HEK293 (cell line): ENCODE measurements at regions of chr1 and their contacts with region 1.

Region 1: GRCh38 chr1:44049839-44050238 is 18.6 kb upstream of the SLC6A9 start:
- H3K4me3 ChIP-seq: no peak overlapping the region
- H3K27ac ChIP-seq: no peak overlapping the region
- H3K4me1 ChIP-seq: no peaks in the 10 kb centered on the region
- CTCF ChIP-seq: no peak

Region 2: GRCh38 chr1:43981636-43982035 is 68.2 kb before region 1 on chr1:
- CTCF ChIA-PET with region 1: no interaction called
- POLR2A ChIA-PET with region 1: no interaction called
- H3K4me3 ChIP-seq: no peak overlapping the region
- H3K27ac ChIP-seq: no peak overlapping the region
- H3K4me1 ChIP-seq: peaks cover 3% of the 10 kb centered on the region; the same call in 1 of the 2 replicates
- CTCF ChIP-seq: no peak

Region 3: GRCh38 chr1:43991476-43992231 is 58.2 kb before region 1 on chr1 and contains the start of gene CCDC24:
- CTCF ChIA-PET with region 1: interaction called, 53 read pairs
- POLR2A ChIA-PET with region 1: no interaction called
- H3K4me3 ChIP-seq: peak within 1 kb of the TSS; percentile 72
- H3K27ac ChIP-seq: peak within 1 kb of the TSS; percentile 39; the same call in 1 of the 2 replicates
- H3K4me1 ChIP-seq: no peaks in the 10 kb centered on the region
- CTCF ChIP-seq: 0 out of 2 replicates have a peak, but pooled peaks have one; percentile 25

Region 4: GRCh38 chr1:44002606-44003157 is 47.2 kb before region 1 on chr1:
- CTCF ChIA-PET with region 1: interaction called, 160 read pairs
- POLR2A ChIA-PET with region 1: no interaction called
- H3K4me3 ChIP-seq: no peak overlapping the region
- H3K27ac ChIP-seq: no peak overlapping the region
- H3K4me1 ChIP-seq: no peaks in the 10 kb centered on the region
- CTCF ChIP-seq: no peak

Region 5: DNA sequence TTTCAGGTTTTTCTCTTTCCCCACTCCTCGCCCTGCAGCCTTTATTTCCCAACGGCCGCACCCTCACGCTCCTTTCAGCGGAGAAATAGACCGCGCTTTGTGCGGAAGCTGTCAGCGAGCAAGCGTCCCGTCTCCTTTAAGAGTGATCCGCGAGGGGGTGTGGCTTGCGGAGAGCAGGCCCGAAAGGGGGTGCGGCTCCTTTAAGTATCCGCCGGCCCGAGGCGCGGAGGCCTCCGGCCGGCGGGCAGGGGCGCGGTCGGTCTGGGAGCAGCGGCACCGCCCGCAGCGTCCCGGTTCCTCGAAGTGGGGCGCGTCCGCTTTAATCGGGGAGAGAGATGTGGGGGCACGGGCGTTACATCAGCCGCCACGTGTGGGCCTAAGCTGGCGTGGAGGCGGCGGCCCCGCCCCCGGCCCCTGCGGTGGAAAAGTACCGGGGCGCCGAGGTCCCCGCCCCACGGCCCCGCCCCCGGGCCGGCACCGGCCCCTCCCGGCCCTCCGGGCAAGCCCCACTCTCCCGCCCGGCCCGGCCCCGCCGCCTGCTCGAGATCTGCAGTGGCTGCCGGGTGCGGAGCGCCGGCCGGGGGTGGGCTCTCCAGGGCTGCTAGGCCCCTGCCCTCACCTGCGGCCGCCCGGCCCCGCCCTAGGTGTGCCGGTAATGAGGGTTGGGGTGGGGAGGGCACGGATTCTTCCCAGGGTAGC is 19.8 kb before region 1 on chr1:
- CTCF ChIA-PET with region 1: interaction called, 100 read pairs
- POLR2A ChIA-PET with region 1: interaction called, 4 read pairs
- H3K4me3 ChIP-seq: peak overlapping the region; percentile 67
- H3K27ac ChIP-seq: peak overlapping the region; percentile 85
- H3K4me1 ChIP-seq: peaks cover 5% of the 10 kb centered on the region; the same call in 1 of the 2 replicates
- CTCF ChIP-seq: no peak; the same call in 1 of the 2 replicates

Region 6: GRCh38 chr1:44036409-44037139 is 13.3 kb before region 1 on chr1:
- CTCF ChIA-PET with region 1: interaction called, 100 read pairs
- POLR2A ChIA-PET with region 1: interaction called, 4 read pairs
- H3K4me3 ChIP-seq: no peak overlapping the region
- H3K27ac ChIP-seq: no peak overlapping the region; the same call in 1 of the 2 replicates
- H3K4me1 ChIP-seq: peaks cover 3% of the 10 kb centered on the region; the same call in 1 of the 2 replicates
- CTCF ChIP-seq: peak; percentile 50

Region 7: DNA sequence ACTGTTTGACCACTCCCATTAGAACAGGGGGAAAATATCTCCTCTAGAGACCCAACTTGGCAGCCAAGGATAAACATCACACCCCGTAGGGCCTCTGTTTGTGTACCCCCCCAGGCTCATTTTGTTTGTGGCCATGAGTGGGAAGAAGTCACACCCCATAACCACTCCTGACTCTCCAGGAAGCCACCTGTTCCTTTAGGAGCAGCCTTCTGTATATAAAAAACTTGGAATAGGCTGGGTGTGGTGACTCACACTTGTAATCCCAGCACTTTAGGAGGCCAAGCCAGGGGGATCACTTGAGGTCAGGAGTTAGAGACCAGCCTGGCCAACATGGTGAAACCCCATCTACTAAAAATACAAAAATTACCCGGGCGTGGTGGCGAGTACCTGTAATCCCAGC is 10.1 kb after region 1 on chr1:
- CTCF ChIA-PET with region 1: interaction called, 22 read pairs
- POLR2A ChIA-PET with region 1: no interaction called
- H3K4me3 ChIP-seq: no peak overlapping the region
- H3K27ac ChIP-seq: no peak overlapping the region
- H3K4me1 ChIP-seq: no peaks in the 10 kb centered on the region
- CTCF ChIP-seq: no peak

Region 8: GRCh38 chr1:44072204-44072603 is 22.4 kb after region 1 on chr1:
- CTCF ChIA-PET with region 1: interaction called, 10 read pairs
- POLR2A ChIA-PET with region 1: no interaction called
- H3K4me3 ChIP-seq: no peak overlapping the region
- H3K27ac ChIP-seq: no peak overlapping the region
- H3K4me1 ChIP-seq: no peaks in the 10 kb centered on the region
- CTCF ChIP-seq: no peak

Region 9: DNA sequence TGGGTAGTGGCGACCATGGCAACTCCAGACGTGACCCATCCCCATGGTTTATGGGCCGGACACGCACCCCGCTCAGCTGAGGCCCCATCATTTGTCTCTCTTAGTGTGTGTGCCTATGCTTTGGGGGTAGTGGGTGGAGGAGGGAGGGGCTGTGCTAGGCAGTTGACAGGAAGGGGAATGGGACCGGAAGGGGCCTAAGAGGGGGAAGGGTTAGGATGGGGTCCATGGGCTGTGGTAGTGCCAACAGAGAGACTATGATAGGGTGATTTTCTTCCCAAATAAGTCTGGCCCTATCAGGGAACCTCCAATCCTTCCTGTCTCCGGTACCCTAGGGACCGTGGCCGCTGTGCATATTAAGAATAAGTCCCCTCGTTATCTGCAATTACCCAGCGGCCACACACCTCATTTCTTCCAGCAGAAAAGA is 173.4 kb after region 1 on chr1:
- CTCF ChIA-PET with region 1: no interaction called
- POLR2A ChIA-PET with region 1: no interaction called
- H3K4me3 ChIP-seq: no peak overlapping the region
- H3K27ac ChIP-seq: no peak overlapping the region
- H3K4me1 ChIP-seq: no peaks in the 10 kb centered on the region
- CTCF ChIP-seq: no peak